Common myeloid progenitor, CD34-positive (primary cell): ENCODE measurements at regions of chr20 and their contacts with region 1.

Region 1: GRCh38 chr20:5156675-5157448 is 30.1 kb downstream of the CDS2 start:
- DNase-seq: no peak
- H3K4me3 ChIP-seq: peak overlapping the region in 1 of 7 experiments; percentile 43
- H3K27ac ChIP-seq: no peak overlapping the region
- H3K4me1 ChIP-seq: peaks cover 0 to 29% (median 2%) of the 10 kb centered on the region in 4 experiments
- H3K27me3 ChIP-seq: no peaks in the 10 kb centered on the region

Region 2: GRCh38 chr20:5168651-5169396 is 12.0 kb after region 1 on chr20:
- CTCF ChIA-PET with region 1: interaction called, 10 read pairs
- POLR2A ChIA-PET with region 1: interaction called, 4 read pairs
- DNase-seq: peak; percentile 27 to 72 (median 67)
- H3K4me3 ChIP-seq: peak overlapping the region in 5 of 7 experiments; percentile 20 to 51 (median 48)
- H3K27ac ChIP-seq: peak overlapping the region in 1 of 2 experiments; percentile 50
- H3K4me1 ChIP-seq: peaks cover 11 to 66% (median 35%) of the 10 kb centered on the region in 4 experiments
- H3K27me3 ChIP-seq: no peaks in the 10 kb centered on the region